Cardiac septum (tissue), 1 donor: ENCODE measurements at regions of chrX and their contacts with region 1.

Region 1: GRCh38 chrX:71514367-71515038 is 18.4 kb upstream of the OGT start:
- DNase-seq: no peak

Region 2: DNA sequence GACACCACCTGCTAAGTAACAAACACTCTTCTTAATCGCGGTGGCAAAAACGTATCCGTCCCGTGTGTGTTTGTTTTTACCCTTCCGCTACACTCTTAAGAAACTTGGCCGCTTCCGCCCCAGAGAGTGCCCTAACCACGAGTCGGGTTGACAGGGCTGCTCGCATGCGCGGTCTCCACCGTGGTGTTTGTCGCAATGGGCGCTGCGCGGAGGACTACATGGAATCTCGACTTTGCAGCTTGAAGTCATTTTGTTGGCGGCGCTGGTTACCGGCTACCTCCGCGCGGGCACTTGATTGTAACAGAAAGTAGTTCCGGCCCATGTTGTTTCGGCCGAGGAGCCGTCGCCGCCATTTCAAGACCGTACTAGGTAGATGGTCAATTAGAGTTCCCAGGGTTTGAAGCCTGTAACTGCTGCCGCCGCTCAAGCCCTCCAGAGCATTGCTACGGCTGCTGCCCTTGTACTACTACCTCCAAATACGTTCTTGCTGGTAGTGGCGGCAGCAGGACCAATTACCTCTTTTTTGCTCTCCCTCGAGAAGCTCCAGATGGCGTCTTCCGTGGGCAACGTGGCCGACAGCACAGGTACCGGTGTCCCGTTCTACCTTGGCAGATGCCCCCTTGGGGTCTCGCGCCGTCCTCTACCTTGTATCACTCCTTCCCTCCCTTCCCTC is 18.4 kb after region 1 on chrX and contains the start of gene OGT:
- intact Hi-C with region 1: loop called (anchors 2 kb)
- DNase-seq: peak; percentile 97
- total RNA-seq, gene OGT: 88.0 TPM

Region 3: GRCh38 chrX:71579136-71579989 is 64.9 kb after region 1 on chrX:
- intact Hi-C with region 1: no loop called
- DNase-seq: no peak